ENCODE measurements at regions of chr14 and their contacts with region 1.

Region 1: GRCh38 chr14:64823305-64823861 is 56.3 kb downstream of the SPTB start:
- DNase-seq: peak; percentile 71 to 81
- ATAC-seq: peak in 1 of 2 donors; percentile 25
- H3K4me3 ChIP-seq: peak overlapping the region in 2 of 4 donors; percentile 23 to 39
- H3K27ac ChIP-seq: peak overlapping the region; percentile 93 to 98 (median 96)
- H3K4me1 ChIP-seq: peaks cover 60 to 62% of the 10 kb centered on the region in 2 donors
- H3K27me3 ChIP-seq: no peaks in the 10 kb centered on the region
- CTCF ChIP-seq: peak; percentile 83 to 92 (median 89)
- POLR2A ChIP-seq: peak in 1 of 2 donors; percentile 12

Region 2: DNA sequence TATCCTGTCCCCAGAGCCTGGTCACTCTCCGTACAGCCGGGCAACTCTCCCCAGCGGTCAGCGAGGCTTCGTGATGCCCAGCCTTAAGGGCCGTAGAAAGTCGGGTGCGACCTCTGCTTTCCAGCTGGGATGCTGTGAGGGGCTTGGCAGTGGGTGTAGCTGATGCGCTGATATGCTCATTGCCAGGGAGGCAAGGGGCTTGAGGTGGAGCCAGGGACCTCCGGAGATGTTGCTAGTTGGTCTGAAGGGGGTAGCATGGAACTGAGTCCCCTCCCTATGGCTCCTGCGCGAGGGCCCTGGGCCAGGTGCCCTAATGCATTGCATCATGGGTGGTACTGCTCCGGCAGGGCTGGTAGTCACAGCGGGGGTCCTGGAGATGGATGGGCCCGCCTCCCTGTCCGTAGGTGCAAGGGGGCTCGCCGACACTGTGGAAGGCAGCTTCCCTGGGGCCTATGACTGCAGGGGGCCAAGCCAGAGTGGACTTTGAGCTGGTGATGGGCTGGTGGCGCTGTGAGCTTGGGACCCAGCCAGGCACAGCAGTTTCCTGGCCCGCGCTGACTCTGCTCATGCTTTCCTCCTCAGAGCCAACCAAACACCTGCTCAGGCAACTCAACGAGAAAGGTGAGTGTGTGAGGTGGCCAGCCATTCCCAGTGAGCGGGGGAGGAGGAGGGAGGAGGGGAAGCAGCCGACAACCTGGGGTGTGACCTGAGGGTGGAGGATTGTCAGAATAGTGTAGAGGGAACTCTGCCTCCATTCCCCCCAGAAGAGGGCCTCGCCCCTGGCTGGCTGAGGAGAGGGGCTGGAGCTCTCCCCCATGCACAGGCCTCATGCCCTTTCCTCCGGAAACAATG is 86.9 kb before region 1 on chr14:
- in situ Hi-C with region 1: no loop called
- intact Hi-C with region 1: no loop called
- DNase-seq: no peak
- ATAC-seq: peak; percentile 20 to 37
- H3K4me3 ChIP-seq: no peak overlapping the region
- H3K27ac ChIP-seq: no peak overlapping the region
- H3K4me1 ChIP-seq: peaks cover 0 to 4% of the 10 kb centered on the region in 2 donors
- H3K27me3 ChIP-seq: no peaks in the 10 kb centered on the region
- CTCF ChIP-seq: no peak
- POLR2A ChIP-seq: no peak

Region 3: DNA sequence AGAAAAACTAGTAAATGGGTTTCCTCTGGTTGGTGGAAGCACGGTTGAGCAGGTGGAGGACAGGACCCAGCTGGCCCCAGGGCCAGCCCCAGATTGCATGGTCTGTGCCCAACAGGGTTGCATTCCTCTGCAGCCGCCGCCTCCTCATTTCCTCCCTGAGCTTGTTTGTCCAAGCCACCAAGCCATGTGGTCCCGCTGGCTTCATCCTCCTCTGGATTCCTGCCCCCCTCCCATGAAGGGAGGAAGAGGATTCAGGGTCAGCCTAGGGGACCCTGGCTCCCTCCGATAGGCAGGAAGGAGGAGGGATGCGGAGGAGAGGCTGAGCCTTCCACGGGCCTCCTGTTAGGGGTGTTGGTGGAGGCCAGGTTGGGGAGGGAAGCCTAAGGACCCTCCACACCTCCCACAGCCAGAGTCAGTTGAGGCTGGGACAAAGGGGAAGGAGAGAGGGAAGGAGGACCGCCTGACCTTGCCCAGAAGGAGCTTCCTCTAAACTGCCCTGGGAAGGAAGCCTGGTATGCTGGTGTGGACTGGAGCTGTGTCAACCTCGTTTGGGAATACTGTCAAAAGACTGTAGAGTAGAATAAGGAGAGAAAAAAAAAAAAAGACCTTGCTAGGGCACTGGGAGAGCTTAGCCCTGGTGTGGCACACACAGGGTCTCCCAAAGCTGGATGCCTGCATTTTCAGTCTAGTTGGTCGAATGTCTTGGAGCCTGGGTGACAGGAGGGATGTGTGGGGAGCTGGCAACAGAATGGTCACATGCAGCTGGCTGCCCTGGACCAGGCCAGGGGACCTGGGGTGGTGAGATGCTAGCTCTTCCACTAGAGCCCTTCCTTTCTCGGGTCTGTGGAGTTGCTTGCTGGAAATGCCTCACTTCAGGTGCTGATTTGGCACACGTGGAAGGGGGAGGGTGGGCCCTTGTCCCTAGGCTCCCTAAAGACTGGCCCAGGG is 76.8 kb before region 1 on chr14:
- in situ Hi-C with region 1: no loop called
- intact Hi-C with region 1: no loop called
- DNase-seq: no peak
- ATAC-seq: no peak
- H3K4me3 ChIP-seq: no peak overlapping the region
- H3K27ac ChIP-seq: peak overlapping the region in 2 of 4 donors; percentile 52 to 54
- H3K4me1 ChIP-seq: peaks cover 10 to 11% of the 10 kb centered on the region in 2 donors
- H3K27me3 ChIP-seq: no peaks in the 10 kb centered on the region
- CTCF ChIP-seq: no peak
- POLR2A ChIP-seq: no peak

Region 4: DNA sequence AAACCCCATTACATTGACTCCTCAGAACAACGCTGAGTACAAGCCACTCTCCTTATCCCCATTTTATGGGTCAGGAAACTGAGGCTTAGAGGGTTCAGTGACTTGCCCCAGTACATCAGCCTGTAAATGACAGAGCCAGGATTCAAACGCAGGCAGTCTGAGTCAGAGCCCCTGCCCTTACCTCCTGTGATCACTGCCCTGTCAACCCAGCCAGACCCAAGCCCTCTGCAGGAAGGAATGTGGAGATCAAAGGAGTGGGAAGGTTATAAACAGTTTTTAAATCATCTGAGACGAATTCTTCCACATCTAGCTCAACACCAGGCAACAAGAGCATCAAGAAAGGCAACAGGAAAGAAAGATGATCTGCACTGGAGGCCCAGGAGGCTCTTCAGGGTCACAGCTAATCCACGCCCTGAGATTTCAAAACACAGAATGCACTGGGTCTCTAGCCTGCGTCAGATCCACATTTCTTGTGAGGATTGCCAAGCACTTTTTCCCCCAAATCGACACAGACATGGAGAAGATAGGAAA is 17.8 kb after region 1 on chr14:
- in situ Hi-C with region 1: no loop called
- intact Hi-C with region 1: loop called (anchors 1 kb)
- DNase-seq: peak; percentile 82 to 90
- ATAC-seq: peak; percentile 67 to 68
- H3K4me3 ChIP-seq: peak overlapping the region in 3 of 4 donors; percentile 15 to 38 (median 30)
- H3K27ac ChIP-seq: peak overlapping the region; percentile 87 to 99 (median 95)
- H3K4me1 ChIP-seq: peaks cover 83 to 92% of the 10 kb centered on the region in 2 donors
- H3K27me3 ChIP-seq: no peaks in the 10 kb centered on the region
- CTCF ChIP-seq: peak; percentile 64 to 90 (median 87)
- POLR2A ChIP-seq: no peak

Region 5: GRCh38 chr14:64880221-64881121 is 57.1 kb after region 1 on chr14:
- in situ Hi-C with region 1: loop called in 1 of 4 experiments (anchors 5 kb)
- intact Hi-C with region 1: loop called (anchors 1 kb)
- DNase-seq: peak in 1 of 2 donors; percentile 38
- ATAC-seq: peak; percentile 16 to 29
- H3K4me3 ChIP-seq: peak overlapping the region; percentile 73 to 84 (median 75)
- H3K27ac ChIP-seq: peak overlapping the region; percentile 98 to 100 (median 98)
- H3K4me1 ChIP-seq: peaks cover 19 to 38% of the 10 kb centered on the region in 2 donors
- H3K27me3 ChIP-seq: peaks cover 0 to 2% (median 0%) of the 10 kb centered on the region in 3 donors
- CTCF ChIP-seq: peak in 1 of 5 experiments; percentile 29
- POLR2A ChIP-seq: no peak

Region 6: DNA sequence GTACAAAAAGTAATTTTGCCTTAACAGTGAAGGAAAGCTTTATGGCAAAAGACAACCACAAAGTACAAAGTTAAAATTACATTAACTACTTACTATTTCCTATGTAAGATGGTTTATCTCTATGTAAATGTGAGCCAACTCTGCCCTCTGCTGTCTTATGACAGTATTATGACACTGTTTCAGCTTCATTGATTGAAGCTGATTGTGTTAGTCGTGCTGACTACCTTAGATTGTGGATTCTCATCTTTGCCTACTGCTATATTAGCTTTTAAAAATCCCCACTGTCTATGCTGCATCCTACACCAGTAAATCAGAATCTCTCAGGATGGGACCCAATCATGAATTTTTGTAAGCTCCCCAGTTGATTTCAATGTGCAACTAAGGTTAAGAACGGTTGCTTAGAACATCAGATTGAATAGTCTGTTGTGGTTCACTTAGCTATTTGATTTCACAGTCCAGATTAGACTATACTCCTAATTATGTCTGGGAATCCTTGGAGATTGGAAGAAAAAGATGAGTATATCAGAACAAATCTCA is 68.5 kb after region 1 on chr14:
- in situ Hi-C with region 1: loop called in 3 of 4 experiments (anchors 5 kb)
- intact Hi-C with region 1: loop called (anchors 5 kb)
- DNase-seq: no peak
- ATAC-seq: peak; percentile 98
- H3K4me3 ChIP-seq: no peak overlapping the region
- H3K27ac ChIP-seq: peak overlapping the region in 1 of 4 donors; percentile 18
- H3K4me1 ChIP-seq: peaks cover 0 to 12% of the 10 kb centered on the region in 2 donors
- H3K27me3 ChIP-seq: no peaks in the 10 kb centered on the region
- CTCF ChIP-seq: peak; percentile 60 to 84 (median 70)
- POLR2A ChIP-seq: no peak

Region 7: DNA sequence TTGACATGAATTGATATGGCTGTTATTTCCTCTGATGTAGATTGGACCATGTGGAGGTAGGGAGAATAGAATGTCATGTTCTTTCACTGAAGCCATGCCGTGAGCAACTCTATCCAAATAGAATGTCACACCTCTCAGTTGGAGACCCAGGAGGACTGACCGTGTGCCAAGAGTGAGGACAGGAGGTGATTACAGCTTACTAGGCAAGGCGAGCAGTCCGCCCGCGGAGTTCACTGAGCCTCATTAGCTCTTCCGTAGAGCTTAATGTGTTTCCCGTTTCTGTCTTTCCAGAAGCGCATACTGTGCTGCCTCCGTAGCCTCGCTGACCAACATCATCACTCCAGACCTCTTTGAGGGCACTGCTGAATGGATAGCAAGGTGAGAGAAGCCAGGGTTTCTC is 208.9 kb after region 1 on chr14:
- in situ Hi-C with region 1: no loop called
- intact Hi-C with region 1: loop called (anchors 2 kb)
- DNase-seq: peak; percentile 91 to 92
- ATAC-seq: peak; percentile 97 to 98
- H3K4me3 ChIP-seq: peak overlapping the region; percentile 23 to 39 (median 33)
- H3K27ac ChIP-seq: peak overlapping the region; percentile 80 to 89 (median 86)
- H3K4me1 ChIP-seq: peaks cover 12 to 16% of the 10 kb centered on the region in 2 donors
- H3K27me3 ChIP-seq: no peaks in the 10 kb centered on the region
- CTCF ChIP-seq: no peak
- POLR2A ChIP-seq: peak; percentile 51 to 54

Measured in gastrocnemius medialis (tissue), 4 donors.